HepG2 (cell line): ENCODE measurements at regions of chr17 and their contacts with region 1.

Region 1: DNA sequence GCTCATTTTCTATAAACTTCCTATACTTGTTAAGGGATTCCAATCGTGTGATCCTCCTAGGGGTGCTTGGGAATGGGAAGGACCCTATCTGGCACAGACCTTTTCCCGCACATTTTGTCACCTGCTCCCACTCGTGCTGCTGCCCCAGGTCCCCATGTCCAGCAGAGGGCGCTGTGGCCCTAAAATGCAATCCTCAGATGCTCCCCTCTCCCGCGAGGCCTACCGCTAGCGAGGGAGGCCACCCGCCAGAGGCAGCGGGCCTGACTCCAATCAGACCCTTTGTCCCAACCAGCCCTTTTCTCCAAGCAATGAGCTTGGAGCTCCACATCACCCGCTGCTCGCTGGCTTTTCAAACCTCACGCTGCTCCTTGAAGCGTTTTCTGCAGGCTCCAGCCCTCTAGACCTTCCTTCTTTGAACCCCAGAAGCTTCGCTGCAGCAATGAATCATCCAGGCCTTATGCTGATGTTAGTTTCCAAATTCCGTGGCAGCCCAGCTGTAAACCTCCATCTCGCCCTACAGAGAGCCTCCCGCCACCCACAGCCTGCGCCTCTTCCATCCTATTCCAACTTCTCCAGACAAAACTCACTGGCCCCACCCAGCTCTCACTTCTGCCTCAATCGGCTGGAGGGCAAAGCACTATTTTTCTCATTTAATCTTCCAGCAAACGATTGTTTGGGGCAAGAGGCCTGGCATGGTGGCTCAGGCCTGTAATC is 23.6 kb upstream of the FZD2 start:
- DNase-seq: peak; percentile 81
- ATAC-seq: peak; percentile 96
- H3K4me3 ChIP-seq: peak overlapping the region; percentile 12 to 56 (median 17); a peak in 2 of 6 replicates
- H3K27ac ChIP-seq: no peak overlapping the region
- H3K4me1 ChIP-seq: peaks cover 16% of the 10 kb centered on the region
- H3K27me3 ChIP-seq: peaks cover 3 to 16% of the 10 kb centered on the region in 2 experiments; a peak in 2 of 5 replicates
- CTCF ChIP-seq: peak; percentile 99
- EP300 ChIP-seq: no peak
- POLR2A ChIP-seq: 0 out of 4 replicates have a peak, but pooled peaks of 1 of the 2 experiments have one; percentile 30
- RAD21 ChIP-seq: peak; percentile 98

Region 2: DNA sequence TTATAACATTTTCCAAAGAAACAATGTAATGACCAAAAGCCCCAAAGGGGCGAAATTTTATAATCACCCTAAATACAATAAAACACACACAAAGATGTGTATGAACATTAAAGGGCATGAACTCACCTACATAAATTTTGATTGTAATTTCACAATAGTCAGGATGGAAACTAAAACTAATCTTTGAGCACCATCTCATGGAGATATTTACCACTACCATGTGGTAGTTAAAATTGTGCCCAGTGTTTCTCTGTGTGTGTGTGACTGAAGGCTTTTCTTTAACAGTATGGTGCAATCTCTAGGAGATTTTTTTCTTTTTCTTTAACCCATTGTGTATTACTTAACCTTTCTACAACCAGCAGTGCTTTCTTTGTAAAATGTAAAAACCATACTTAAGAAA is 102.9 kb after region 1 on chr17:
- CTCF ChIA-PET with region 1: interaction called, 19 read pairs
- POLR2A ChIA-PET with region 1: no interaction called
- in situ Hi-C with region 1: no loop called
- intact Hi-C with region 1: loop called (anchors 1 kb)
- DNase-seq: peak; percentile 16
- ATAC-seq: no peak
- H3K4me3 ChIP-seq: no peak overlapping the region
- H3K27ac ChIP-seq: no peak overlapping the region
- H3K4me1 ChIP-seq: no peaks in the 10 kb centered on the region
- H3K27me3 ChIP-seq: no peaks in the 10 kb centered on the region
- CTCF ChIP-seq: peak; percentile 67
- EP300 ChIP-seq: no peak
- POLR2A ChIP-seq: no peak
- RAD21 ChIP-seq: peak; percentile 51; the same call in 1 of the 2 replicates

Region 3: DNA sequence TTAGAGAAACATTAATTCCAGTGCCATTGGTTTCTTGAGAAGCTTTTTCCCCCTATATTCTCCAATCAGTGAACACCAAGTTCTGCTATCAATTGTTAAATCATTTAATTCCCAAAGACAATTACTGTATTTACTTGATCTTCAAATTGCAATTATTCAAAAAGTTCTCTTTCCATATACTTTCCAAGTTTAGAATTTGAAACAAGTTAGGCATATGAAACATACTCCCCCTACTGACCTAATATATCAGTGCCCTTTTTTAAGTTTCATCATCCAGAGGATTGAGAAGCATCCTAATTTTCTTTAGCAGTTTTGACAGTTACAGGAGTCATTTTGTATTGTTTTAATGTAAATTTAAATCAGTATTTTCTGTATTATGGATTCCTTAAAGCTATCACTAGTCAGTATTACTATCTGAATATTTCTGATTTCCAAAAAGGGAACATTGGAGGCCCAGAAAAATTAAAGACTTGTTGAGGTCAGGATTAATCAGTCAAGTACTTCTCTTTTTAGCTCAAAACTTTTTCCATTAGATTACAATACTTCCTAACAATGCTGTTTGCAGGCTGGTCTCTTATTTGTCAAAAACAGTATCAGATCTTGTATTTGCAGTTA is 138.9 kb after region 1 on chr17:
- CTCF ChIA-PET with region 1: interaction called, 30 read pairs
- POLR2A ChIA-PET with region 1: no interaction called
- in situ Hi-C with region 1: loop called (anchors 10 kb)
- intact Hi-C with region 1: loop called (anchors 1 kb)
- DNase-seq: peak; percentile 27
- ATAC-seq: peak; percentile 49; the same call in 1 of the 3 replicates
- H3K4me3 ChIP-seq: no peak overlapping the region
- H3K27ac ChIP-seq: no peak overlapping the region
- H3K4me1 ChIP-seq: no peaks in the 10 kb centered on the region
- H3K27me3 ChIP-seq: no peaks in the 10 kb centered on the region
- CTCF ChIP-seq: peak; percentile 52
- EP300 ChIP-seq: no peak
- POLR2A ChIP-seq: no peak
- RAD21 ChIP-seq: peak; percentile 22; the same call in 1 of the 2 replicates